Ovary (tissue), 10 donors: ENCODE measurements at regions of chr20 and their contacts with region 1.

Region 1: GRCh38 chr20:25310268-25310920 is 62.5 kb downstream of the PYGB start:
- DNase-seq: peak in 4 of 5 donors; percentile 39 to 61 (median 52)
- H3K4me3 ChIP-seq: peak overlapping the region; percentile 15
- H3K27ac ChIP-seq: peak overlapping the region; percentile 45 to 56
- H3K4me1 ChIP-seq: peaks cover 18% of the 10 kb centered on the region
- H3K27me3 ChIP-seq: no peaks in the 10 kb centered on the region
- CTCF ChIP-seq: peak in 2 of 3 donors; percentile 33 to 51
- EP300 ChIP-seq: no peak
- POLR2A ChIP-seq: no peak

Region 2: DNA sequence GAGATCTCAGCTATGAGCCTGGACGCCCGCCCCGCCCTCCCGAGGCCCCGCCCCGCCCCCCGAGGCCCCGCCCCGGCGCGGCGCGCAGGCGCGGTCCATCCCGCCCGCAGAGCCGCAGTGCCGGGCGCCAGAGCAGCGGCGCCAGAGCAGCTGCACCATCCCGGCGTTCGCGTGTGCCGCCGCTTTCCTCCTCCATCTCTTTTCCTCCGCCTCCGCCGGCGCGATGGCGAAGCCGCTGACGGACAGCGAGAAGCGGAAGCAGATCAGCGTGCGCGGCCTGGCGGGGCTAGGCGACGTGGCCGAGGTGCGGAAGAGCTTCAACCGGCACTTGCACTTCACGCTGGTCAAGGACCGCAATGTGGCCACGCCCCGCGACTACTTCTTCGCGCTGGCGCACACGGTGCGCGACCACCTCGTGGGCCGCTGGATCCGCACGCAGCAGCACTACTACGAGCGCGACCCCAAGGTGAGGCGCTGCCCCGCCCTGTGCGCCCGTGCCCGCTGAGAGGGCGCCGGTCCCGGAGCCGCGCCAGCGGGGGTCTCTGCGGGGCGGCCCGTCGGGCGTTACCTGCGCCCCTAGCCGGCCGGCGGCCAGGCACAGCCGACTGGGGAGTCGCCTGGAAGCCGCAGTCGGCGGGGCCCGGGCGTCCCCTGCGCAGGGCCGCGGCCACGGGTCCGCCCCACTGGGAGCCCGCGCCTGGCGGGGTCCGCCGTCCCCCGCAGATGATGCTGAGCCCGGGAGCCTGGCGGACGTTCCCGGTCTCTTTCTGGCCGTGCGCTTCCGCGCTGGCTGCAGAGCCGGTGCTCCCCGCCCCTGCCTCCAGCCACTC is 62.2 kb before region 1 on chr20 and contains the start of gene PYGB:
- intact Hi-C with region 1: loop called in 1 of 4 experiments (anchors 10 kb)
- DNase-seq: peak; percentile 71 to 86 (median 78)
- H3K4me3 ChIP-seq: peak within 1 kb of the TSS; percentile 51
- H3K27ac ChIP-seq: peak within 1 kb of the TSS; percentile 65 to 78
- H3K4me1 ChIP-seq: peaks cover 5% of the 10 kb centered on the region
- H3K27me3 ChIP-seq: no peaks in the 10 kb centered on the region
- CTCF ChIP-seq: peak in 1 of 3 donors; percentile 11
- EP300 ChIP-seq: no peak
- POLR2A ChIP-seq: peak; percentile 71
- total RNA-seq, gene PYGB: 24.2 to 54.2 (median 52.2) TPM

Region 3: DNA sequence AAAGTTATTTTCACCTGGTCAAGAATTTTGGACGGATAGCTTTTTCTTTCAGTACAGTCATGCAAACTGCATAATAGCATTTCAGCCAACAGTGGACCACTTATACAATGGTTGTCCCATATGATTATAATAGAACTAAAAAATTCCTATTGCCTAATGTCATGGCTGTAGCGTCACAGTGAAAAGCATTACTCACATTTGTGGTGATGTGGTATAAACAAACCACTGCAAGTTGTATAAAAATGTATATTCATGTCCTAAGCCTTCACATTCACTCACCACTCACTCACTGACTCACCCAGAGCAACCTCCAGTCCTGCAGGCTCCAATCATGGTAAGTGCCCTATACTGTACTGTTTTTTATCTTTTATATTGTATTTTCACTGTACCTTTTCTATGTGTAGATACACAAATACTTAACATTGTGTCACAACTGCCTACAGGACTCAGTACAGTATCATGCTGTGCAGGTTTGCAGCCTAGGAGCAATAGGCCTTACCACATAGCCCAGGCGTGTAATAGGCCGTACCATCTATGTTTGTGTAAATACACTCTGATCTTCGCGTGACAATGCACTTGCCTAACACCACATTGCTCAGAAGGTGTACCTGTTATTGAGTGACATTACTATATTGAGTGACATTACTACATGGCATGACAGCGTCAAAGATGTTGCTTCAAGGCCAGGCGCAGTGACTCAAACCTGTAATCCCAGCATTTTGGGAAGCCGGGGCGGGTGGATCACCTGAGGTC is 62.4 kb after region 1 on chr20:
- intact Hi-C with region 1: no loop called
- DNase-seq: no peak
- H3K4me3 ChIP-seq: no peak overlapping the region
- H3K27ac ChIP-seq: no peak overlapping the region
- H3K4me1 ChIP-seq: peaks cover 3% of the 10 kb centered on the region
- H3K27me3 ChIP-seq: no peaks in the 10 kb centered on the region
- CTCF ChIP-seq: no peak
- EP300 ChIP-seq: no peak
- POLR2A ChIP-seq: no peak